H1 (cell line): ENCODE measurements at regions of chr11 and their contacts with region 1.

Region 1: DNA sequence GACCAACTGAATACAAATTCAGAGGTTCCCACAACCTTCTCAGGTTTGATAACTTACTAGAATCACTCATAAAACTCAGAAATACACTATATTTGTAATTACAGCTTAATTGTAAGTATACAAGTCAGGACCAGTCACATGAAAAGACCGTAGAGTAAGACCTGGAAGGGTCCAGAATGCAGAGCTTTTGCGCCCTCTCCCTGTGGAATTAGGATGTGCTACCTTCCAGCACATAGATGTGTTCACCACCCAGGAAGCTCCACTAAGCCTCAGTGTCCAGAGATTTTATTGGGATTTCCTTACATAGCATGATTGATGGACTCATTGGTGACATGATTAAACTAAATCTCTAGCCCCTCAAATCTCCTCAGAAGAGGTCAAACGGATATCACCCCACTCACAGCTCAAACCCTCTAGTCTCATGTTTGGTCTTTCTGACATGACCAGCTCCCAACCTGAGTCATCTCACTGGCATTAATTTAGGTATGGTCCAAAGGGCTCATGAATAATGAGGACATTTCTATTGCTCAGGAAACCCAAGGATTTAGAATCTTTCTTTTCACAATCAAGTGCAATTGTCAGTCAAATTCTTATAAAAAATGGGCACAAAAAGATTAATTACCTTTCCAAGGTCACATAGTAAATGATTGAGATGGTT is 77.2 kb upstream of the UBASH3B start:
- DNase-seq: no peak
- H3K4me3 ChIP-seq: no peak overlapping the region
- H3K27ac ChIP-seq: no peak overlapping the region
- H3K4me1 ChIP-seq: peaks cover 0 to 3% (median 0%) of the 10 kb centered on the region in 4 experiments; a peak in 2 of 7 replicates
- H3K27me3 ChIP-seq: no peaks in the 10 kb centered on the region
- CTCF ChIP-seq: peak in 2 of 3 experiments; percentile 17 to 27; a peak in 2 of 4 replicates
- EP300 ChIP-seq: no peak
- POLR2A ChIP-seq: no peak
- RAD21 ChIP-seq: peak; percentile 34 to 44

Region 2: GRCh38 chr11:122422707-122423106 is 155.6 kb before region 1 on chr11:
- CTCF ChIA-PET with region 1: no interaction called
- POLR2A ChIA-PET with region 1: no interaction called
- DNase-seq: no peak
- H3K4me3 ChIP-seq: no peak overlapping the region
- H3K27ac ChIP-seq: no peak overlapping the region
- H3K4me1 ChIP-seq: peaks cover 0 to 9% (median 0%) of the 10 kb centered on the region in 4 experiments; a peak in 2 of 7 replicates
- H3K27me3 ChIP-seq: peaks cover 0 to 1% (median 0%) of the 10 kb centered on the region in 4 experiments; a peak in 1 of 7 replicates
- CTCF ChIP-seq: no peak
- EP300 ChIP-seq: no peak
- POLR2A ChIP-seq: no peak
- RAD21 ChIP-seq: no peak

Region 3: GRCh38 chr11:122556605-122557004 is 21.7 kb before region 1 on chr11:
- CTCF ChIA-PET with region 1: interaction called, 12 read pairs
- POLR2A ChIA-PET with region 1: no interaction called
- DNase-seq: peak in 1 of 2 experiments; percentile 81
- H3K4me3 ChIP-seq: peak overlapping the region; percentile 22 to 57 (median 26); a peak in 7 of 8 replicates
- H3K27ac ChIP-seq: no peak overlapping the region
- H3K4me1 ChIP-seq: peaks cover 0 to 4% (median under 1%) of the 10 kb centered on the region in 4 experiments; a peak in 2 of 7 replicates
- H3K27me3 ChIP-seq: peaks cover 0 to 5% (median 2%) of the 10 kb centered on the region in 4 experiments; a peak in 3 of 7 replicates
- CTCF ChIP-seq: peak; percentile 58 to 70 (median 58)
- EP300 ChIP-seq: no peak
- POLR2A ChIP-seq: no peak
- RAD21 ChIP-seq: peak; percentile 37 to 44

Region 4: GRCh38 chr11:122746050-122746478 is 167.8 kb after region 1 on chr11:
- CTCF ChIA-PET with region 1: no interaction called
- POLR2A ChIA-PET with region 1: no interaction called
- DNase-seq: no peak
- H3K4me3 ChIP-seq: no peak overlapping the region
- H3K27ac ChIP-seq: no peak overlapping the region
- H3K4me1 ChIP-seq: peaks cover 0 to 2% (median 0%) of the 10 kb centered on the region in 4 experiments; a peak in 1 of 7 replicates
- H3K27me3 ChIP-seq: peaks cover 0 to 6% (median 0%) of the 10 kb centered on the region in 4 experiments; a peak in 1 of 7 replicates
- CTCF ChIP-seq: no peak
- EP300 ChIP-seq: no peak
- POLR2A ChIP-seq: no peak
- RAD21 ChIP-seq: no peak

Region 5: GRCh38 chr11:122781378-122782195 is 203.3 kb after region 1 on chr11:
- CTCF ChIA-PET with region 1: interaction called, 10 read pairs
- POLR2A ChIA-PET with region 1: no interaction called
- DNase-seq: peak; percentile 77 to 95
- H3K4me3 ChIP-seq: no peak overlapping the region
- H3K27ac ChIP-seq: no peak overlapping the region
- H3K4me1 ChIP-seq: peaks cover 0 to 2% (median 0%) of the 10 kb centered on the region in 4 experiments; a peak in 4 of 7 replicates
- H3K27me3 ChIP-seq: no peaks in the 10 kb centered on the region
- CTCF ChIP-seq: peak; percentile 81 to 95 (median 93)
- EP300 ChIP-seq: no peak
- POLR2A ChIP-seq: no peak
- RAD21 ChIP-seq: peak; percentile 89 to 94